CD8-positive, alpha-beta T cell (primary cell): ENCODE measurements at regions of chr15 and their contacts with region 1.

Region 1: GRCh38 chr15:70459312-70459875 is 304.0 kb downstream of the UACA start:
- DNase-seq: no peak
- ATAC-seq: no peak
- H3K4me3 ChIP-seq: no peak overlapping the region
- H3K4me3 Mint-ChIP-seq: no peak overlapping the region
- H3K27ac ChIP-seq: no peak overlapping the region
- H3K27ac Mint-ChIP-seq: no peak overlapping the region
- H3K4me1 ChIP-seq: no peaks in the 10 kb centered on the region
- H3K4me1 Mint-ChIP-seq: peaks cover 6% of the 10 kb centered on the region
- H3K27me3 ChIP-seq: no peaks in the 10 kb centered on the region
- H3K27me3 Mint-ChIP-seq: peaks cover 3% of the 10 kb centered on the region
- CTCF ChIP-seq: no peak

Region 2: DNA sequence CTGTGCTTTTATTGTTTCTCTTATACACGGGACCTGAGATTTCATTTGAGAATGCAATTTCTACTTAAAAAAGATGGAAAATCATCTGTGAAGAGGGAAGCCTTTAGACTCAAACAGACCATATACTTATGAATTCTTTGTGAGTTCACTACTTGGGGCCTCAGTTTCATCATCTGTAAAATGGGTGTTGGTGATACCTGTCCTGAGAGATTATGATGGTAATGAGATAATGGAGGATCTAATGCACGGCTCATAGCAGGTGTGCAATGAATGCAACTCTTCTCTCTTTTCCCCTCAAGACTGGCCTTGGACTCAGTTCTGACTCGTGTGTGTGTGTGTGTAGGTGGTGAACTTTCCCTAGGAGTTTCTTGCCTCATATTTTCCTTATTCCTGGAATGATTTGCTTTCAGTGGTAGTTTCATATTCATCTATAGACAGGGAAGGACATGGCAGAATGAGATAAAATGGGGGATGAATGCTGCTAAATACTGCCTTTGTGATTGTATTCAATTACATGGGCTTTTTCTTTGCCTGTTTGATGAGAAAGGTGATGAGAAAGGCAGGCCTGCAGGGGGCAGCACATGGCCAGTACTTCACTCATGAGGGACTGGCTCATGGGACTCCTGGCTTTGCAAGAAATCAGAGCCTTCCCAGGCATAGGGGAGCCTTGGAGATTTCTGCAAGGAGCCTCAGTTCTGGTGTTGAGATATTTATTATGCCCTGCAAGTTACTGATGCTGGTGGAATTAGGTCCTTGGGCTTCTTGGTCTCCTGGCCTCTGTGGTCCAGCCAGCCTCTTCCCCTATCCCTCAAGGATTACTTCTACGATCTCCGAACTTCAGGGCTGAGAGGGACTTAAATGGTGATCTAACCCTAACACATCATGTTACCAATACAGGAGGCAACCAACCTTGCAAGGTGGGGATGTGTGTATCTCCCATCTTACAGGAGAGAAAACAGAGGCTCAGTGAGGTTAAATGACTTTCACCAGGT is 936.1 kb before region 1 on chr15:
- CTCF ChIA-PET with region 1: interaction called, 3 read pairs
- POLR2A ChIA-PET with region 1: no interaction called
- intact Hi-C with region 1: loop called in 1 of 2 experiments (anchors 5 kb)
- DNase-seq: peak; percentile 29 to 78 (median 60)
- ATAC-seq: peak; percentile 40
- H3K4me3 ChIP-seq: no peak overlapping the region
- H3K4me3 Mint-ChIP-seq: no peak overlapping the region
- H3K27ac ChIP-seq: no peak overlapping the region
- H3K27ac Mint-ChIP-seq: no peak overlapping the region
- H3K4me1 ChIP-seq: no peaks in the 10 kb centered on the region
- H3K4me1 Mint-ChIP-seq: no peaks in the 10 kb centered on the region
- H3K27me3 ChIP-seq: no peaks in the 10 kb centered on the region
- H3K27me3 Mint-ChIP-seq: peaks cover 11% of the 10 kb centered on the region
- CTCF ChIP-seq: peak; percentile 45

Region 3: DNA sequence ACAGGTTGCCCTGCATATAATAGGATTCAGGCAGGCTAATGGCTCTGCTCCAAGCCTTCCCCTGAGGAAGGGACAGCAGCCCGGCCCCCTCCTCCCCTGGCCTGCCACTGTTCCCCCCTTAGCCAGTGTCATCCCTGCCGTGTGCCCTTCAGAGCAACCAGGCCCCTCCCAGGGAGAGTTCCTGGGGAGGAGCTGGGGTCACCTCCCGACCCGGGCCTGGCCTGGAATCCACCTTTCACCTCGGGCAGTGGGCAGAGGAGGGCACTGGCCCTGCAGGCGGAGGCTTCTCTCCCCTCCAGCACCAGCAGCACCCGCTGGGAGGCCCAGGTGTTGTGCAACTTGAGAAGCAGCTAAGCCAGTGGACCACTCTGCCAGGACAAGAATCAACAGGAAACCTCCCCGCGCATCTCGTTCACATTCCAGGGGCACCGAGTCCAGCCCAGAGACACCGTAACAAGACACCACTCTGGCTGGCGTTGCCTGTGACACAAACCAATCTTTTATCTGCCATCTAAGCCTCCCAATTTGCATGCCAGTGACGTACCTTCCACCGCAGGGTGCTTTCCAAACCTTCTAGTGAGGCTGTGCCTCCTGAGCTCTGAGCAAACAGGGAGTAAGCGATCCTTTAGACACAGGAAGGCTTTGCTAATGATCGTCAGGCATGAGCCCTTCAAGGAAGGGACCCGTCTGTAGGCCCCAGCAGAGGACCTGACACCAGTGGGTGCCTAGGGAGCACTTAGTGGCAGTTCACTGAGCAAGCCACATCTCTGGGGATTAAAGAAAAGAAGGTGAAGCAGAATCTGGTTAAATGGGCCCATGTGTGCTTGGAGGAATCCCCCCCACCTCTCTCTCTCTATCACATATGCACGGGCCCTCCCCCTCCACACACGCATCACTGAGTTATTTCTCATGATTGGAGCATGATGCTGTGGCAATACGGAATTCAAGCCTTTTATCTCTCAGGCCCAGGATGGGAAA is 262.8 kb before region 1 on chr15:
- CTCF ChIA-PET with region 1: no interaction called
- POLR2A ChIA-PET with region 1: no interaction called
- intact Hi-C with region 1: no loop called
- DNase-seq: peak in 4 of 9 experiments; percentile 13 to 42 (median 24)
- ATAC-seq: peak; percentile 42
- H3K4me3 ChIP-seq: no peak overlapping the region
- H3K4me3 Mint-ChIP-seq: no peak overlapping the region
- H3K27ac ChIP-seq: no peak overlapping the region
- H3K27ac Mint-ChIP-seq: no peak overlapping the region
- H3K4me1 ChIP-seq: no peaks in the 10 kb centered on the region
- H3K4me1 Mint-ChIP-seq: no peaks in the 10 kb centered on the region
- H3K27me3 ChIP-seq: no peaks in the 10 kb centered on the region
- H3K27me3 Mint-ChIP-seq: no peaks in the 10 kb centered on the region
- CTCF ChIP-seq: no peak

Region 4: GRCh38 chr15:70439304-70439877 is 20.0 kb before region 1 on chr15:
- CTCF ChIA-PET with region 1: interaction called, 12 read pairs
- POLR2A ChIA-PET with region 1: no interaction called
- intact Hi-C with region 1: no loop called
- DNase-seq: no peak
- ATAC-seq: no peak
- H3K4me3 ChIP-seq: no peak overlapping the region
- H3K4me3 Mint-ChIP-seq: no peak overlapping the region
- H3K27ac ChIP-seq: no peak overlapping the region
- H3K27ac Mint-ChIP-seq: no peak overlapping the region
- H3K4me1 ChIP-seq: peaks cover 20% of the 10 kb centered on the region
- H3K4me1 Mint-ChIP-seq: peaks cover 27% of the 10 kb centered on the region
- H3K27me3 ChIP-seq: no peaks in the 10 kb centered on the region
- H3K27me3 Mint-ChIP-seq: peaks cover 14% of the 10 kb centered on the region
- CTCF ChIP-seq: no peak